ENCODE measurements at regions of chr19 and their contacts with region 1.

Region 1: GRCh38 chr19:54179921-54180461 is 7.0 kb upstream of the TMC4 start:
- DNase-seq: no peak
- H3K4me3 ChIP-seq: no peak overlapping the region
- H3K27ac ChIP-seq: no peak overlapping the region
- H3K4me1 ChIP-seq: no peaks in the 10 kb centered on the region
- H3K27me3 ChIP-seq: no peaks in the 10 kb centered on the region
- CTCF ChIP-seq: no peak
- POLR2A ChIP-seq: no peak

Region 2: GRCh38 chr19:54168174-54168917 is 11.6 kb before region 1 on chr19:
- intact Hi-C with region 1: loop called (anchors 1 kb)
- DNase-seq: peak; percentile 78 to 93
- H3K4me3 ChIP-seq: no peak overlapping the region
- H3K27ac ChIP-seq: no peak overlapping the region
- H3K4me1 ChIP-seq: no peaks in the 10 kb centered on the region
- H3K27me3 ChIP-seq: no peaks in the 10 kb centered on the region
- CTCF ChIP-seq: peak; percentile 57 to 71 (median 66)
- POLR2A ChIP-seq: no peak

Region 3: DNA sequence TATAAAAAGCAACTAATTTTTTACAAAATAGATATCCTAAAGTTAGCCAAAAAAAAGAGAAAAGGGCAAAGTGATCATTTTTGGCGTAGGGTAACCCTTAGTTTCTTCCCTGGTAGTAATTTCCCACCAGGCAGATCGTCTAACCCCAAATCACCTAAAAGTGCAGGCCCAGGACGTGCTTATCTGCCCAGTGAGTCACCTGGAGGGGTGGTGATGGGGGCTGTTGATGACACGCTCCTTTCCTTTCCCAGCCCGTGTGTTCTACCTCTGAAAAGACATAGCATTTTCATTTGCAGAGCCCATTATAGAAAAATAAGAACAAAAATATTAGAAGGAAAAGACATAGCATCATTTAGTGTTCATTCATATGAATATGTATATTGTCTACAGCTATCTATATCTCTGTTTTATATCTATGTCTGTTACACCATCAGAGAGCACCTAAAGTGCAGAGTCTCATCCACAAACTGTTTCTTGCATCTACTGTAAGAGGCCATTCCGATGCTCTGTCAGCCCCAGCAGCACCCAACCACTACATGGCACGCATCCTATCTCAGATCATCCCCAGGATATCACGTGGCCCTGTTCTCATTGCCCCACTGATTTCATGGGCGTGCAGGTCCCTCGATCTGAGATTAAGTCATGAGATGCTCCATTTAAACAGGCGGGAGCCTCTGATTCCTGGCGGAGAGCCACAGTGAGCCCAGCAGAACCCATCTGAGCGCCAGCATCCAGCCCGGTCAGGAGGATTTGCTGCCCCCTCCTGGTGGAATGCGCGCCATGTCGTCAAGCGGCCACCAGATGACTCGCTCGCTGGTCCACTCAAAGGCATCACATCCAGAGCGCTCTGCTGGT is 51.3 kb after region 1 on chr19:
- intact Hi-C with region 1: loop called (anchors 10 kb)
- DNase-seq: peak; percentile 60 to 80
- H3K4me3 ChIP-seq: no peak overlapping the region
- H3K27ac ChIP-seq: no peak overlapping the region
- H3K4me1 ChIP-seq: no peaks in the 10 kb centered on the region
- H3K27me3 ChIP-seq: peaks cover 0 to 14% of the 10 kb centered on the region in 2 donors
- CTCF ChIP-seq: peak; percentile 50 to 85 (median 85)
- POLR2A ChIP-seq: no peak

Region 4: DNA sequence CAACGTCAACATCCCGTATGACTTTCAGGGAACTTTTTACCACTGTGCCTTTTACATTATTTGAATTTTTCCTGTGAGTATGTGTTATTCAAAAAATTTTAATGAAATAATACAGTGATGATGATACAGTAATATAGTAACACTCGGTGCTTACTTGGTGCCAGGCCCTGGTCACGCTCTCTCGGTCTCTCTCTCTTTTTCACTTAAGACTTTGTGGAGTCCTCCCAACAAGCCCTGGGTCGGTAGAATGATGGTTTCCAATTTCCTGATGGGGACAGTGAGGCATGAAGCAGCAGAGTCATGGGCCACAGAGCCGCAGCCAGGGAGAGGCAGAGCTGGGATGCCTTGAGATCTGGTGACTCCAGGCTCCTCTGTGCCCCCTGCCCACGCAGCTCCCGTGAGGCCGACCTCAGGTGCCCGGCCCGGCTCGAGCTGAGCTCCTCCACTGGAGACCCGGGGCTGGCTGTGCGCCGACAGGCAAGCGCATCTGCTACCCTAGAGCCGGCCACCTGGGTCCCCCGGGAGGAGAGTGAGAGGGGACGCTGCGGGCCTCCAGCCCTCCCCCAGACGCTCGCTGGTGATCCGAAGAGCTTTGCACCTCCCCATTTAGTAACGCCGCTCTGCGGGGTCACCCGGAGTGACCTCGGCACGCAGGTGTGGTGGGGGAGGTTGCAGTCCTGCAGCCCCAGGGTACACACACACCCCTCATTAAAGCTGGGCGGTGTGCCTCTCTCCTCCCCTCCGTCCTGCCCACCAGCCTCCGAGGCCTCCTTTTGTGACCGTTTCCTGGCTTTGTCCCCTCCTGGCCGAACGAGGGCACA is 1369.7 kb after region 1 on chr19:
- intact Hi-C with region 1: no loop called
- DNase-seq: no peak
- H3K4me3 ChIP-seq: peak overlapping the region in 2 of 3 donors; percentile 11 to 55
- H3K27ac ChIP-seq: peak overlapping the region; percentile 48 to 83
- H3K4me1 ChIP-seq: peaks cover 0 to 6% of the 10 kb centered on the region in 2 donors
- H3K27me3 ChIP-seq: no peaks in the 10 kb centered on the region
- CTCF ChIP-seq: no peak
- POLR2A ChIP-seq: no peak